HEK293 (cell line): ENCODE measurements at regions of chr6 and their contacts with region 1.

Region 1: DNA sequence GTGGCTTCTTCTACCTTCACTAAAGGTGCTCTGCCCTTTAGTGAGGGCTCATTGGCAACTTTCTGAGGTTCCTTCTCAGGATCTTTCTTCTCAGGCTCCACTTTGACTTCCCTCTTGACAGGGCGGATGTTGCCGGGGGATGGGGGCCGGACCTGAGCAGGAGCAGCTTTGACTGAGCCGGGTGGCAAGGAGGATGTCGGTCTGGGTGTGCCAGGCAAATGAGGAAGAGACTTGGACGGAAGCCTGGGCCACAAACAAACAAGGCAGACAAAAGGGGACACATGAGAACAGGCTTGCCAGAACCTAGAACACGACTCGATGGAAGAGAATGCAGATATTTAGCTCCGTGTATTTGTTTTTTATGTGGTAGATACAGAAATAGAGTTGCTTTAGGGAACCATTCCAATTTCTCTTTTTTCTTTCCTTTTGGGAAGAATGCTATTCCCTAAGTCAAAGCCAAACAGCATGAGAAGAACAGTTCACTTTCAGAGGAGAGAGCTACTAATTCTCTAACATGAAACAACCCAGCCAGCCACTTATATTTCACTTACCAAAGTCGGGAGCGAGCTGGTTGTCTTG is 76.2 kb upstream of the BCLAF1 start:
- H3K4me3 ChIP-seq: no peak overlapping the region
- H3K27ac ChIP-seq: no peak overlapping the region
- H3K4me1 ChIP-seq: no peaks in the 10 kb centered on the region
- CTCF ChIP-seq: no peak

Region 2: GRCh38 chr6:136249811-136250685 is 115.8 kb before region 1 on chr6 and contains the start of gene MTFR2:
- CTCF ChIA-PET with region 1: no interaction called
- POLR2A ChIA-PET with region 1: no interaction called
- H3K4me3 ChIP-seq: peak within 1 kb of the TSS; percentile 80
- H3K27ac ChIP-seq: peak within 1 kb of the TSS; percentile 51
- H3K4me1 ChIP-seq: peaks cover 12% of the 10 kb centered on the region; the same call in 1 of the 2 replicates
- CTCF ChIP-seq: peak; percentile 87; the same call in 1 of the 2 replicates

Region 3: DNA sequence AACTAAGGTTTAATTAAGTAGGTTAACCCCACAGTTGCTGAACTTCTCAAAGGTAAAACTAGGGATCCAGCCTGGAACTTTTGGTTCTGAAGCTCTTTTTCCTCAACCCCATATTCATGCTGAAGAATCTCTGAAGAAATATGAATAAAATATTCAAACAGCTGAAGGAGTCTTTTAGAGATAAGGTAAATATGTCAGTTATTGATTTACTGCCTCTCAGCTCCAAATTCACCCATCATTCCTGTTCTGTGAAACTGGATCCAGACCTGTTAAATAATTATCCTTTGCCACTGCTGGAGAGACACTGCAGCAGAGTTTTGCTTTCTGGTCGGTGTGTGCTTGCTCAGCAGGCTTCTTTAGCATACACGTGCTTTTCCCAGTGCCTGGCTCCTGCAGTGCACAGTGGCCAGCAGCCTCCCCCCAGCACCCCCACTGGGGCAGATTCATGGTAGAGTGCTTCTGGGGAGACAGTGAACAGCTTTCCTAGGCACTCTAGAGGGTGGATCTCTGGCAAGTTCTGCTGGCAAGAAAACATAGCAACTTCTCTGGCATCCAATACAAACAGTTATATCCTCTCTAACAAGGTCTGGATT is 14.3 kb before region 1 on chr6:
- CTCF ChIA-PET with region 1: interaction called, 13 read pairs
- POLR2A ChIA-PET with region 1: no interaction called
- H3K4me3 ChIP-seq: no peak overlapping the region
- H3K27ac ChIP-seq: no peak overlapping the region
- H3K4me1 ChIP-seq: peaks cover 6% of the 10 kb centered on the region; the same call in 1 of the 2 replicates
- CTCF ChIP-seq: no peak